Activated CD4-positive, alpha-beta T cell treated with anti-CD3 and anti-CD28 coated beads for 36 hours (primary cell): ENCODE measurements at regions of chr1 and their contacts with region 1.

Region 1: GRCh38 chr1:172638885-172639831 is 19.7 kb upstream of the FASLG start:
- DNase-seq: peak; percentile 91
- ATAC-seq: peak; percentile 83
- H3K4me3 Mint-ChIP-seq: peak overlapping the region; percentile 56
- H3K27ac Mint-ChIP-seq: peak overlapping the region; percentile 99
- H3K4me1 Mint-ChIP-seq: peaks cover 73% of the 10 kb centered on the region
- H3K27me3 Mint-ChIP-seq: peaks cover 22% of the 10 kb centered on the region

Region 2: DNA sequence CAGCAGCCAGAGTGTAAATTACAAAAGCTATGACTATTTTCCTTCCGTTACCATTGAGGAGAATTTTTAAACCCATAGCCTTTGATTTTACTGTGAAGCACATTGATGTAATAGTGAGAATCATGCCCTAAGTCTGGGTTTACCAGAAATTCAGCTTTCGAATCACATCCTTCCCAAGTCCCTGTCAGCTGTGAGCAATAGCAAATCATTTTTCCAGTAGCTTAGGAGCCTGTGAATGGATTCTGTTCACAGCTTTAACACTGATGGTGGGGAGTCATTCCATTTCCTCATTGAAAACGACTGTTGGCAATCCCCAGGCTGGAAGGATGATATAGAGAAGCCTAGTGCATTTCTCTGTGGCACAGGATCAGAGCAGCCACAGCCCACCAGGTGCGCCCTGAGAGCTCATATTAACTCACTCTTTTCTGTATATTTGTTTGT is 300.8 kb before region 1 on chr1:
- CTCF ChIA-PET with region 1: no interaction called
- POLR2A ChIA-PET with region 1: interaction called, 3 read pairs
- intact Hi-C with region 1: loop called (anchors 1 kb)
- DNase-seq: peak; percentile 82
- ATAC-seq: peak; percentile 88
- H3K4me3 Mint-ChIP-seq: no peak overlapping the region
- H3K27ac Mint-ChIP-seq: peak overlapping the region; percentile 30
- H3K4me1 Mint-ChIP-seq: peaks cover 48% of the 10 kb centered on the region
- H3K27me3 Mint-ChIP-seq: peaks cover 2% of the 10 kb centered on the region

Region 3: GRCh38 chr1:172609528-172609927 is 29.6 kb before region 1 on chr1:
- CTCF ChIA-PET with region 1: interaction called, 9 read pairs
- POLR2A ChIA-PET with region 1: no interaction called
- intact Hi-C with region 1: loop called in 1 of 2 experiments (anchors 2 kb)
- DNase-seq: no peak
- ATAC-seq: no peak
- H3K4me3 Mint-ChIP-seq: no peak overlapping the region
- H3K27ac Mint-ChIP-seq: no peak overlapping the region
- H3K4me1 Mint-ChIP-seq: peaks cover 7% of the 10 kb centered on the region
- H3K27me3 Mint-ChIP-seq: no peaks in the 10 kb centered on the region

Region 4: DNA sequence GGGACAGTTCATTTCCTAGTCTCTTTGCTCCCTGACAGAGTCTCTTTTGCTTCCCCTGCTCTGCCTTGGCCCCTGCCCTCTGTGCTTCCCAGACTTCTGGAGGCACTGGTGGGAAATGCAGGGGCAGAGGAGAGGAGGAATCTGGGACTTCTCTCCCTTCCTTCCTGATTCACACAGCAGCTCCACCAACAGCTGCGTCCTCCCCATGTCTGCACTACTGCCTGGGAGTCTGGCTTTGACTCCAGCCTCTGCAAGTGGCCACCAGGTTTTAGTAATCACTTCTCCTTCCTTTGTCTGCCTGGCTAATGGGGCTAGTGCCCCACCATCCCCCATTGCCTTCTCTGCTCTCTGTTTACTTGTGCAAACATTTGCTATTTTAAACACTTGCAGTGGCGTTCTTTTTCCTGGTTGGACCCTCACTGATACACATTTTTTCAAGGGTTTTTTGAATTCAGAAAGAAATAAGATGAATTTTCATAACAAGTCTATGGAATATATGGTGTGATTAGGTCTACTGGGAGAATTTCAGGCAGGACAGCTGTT is 41.6 kb after region 1 on chr1:
- CTCF ChIA-PET with region 1: no interaction called
- POLR2A ChIA-PET with region 1: no interaction called
- intact Hi-C with region 1: no loop called
- DNase-seq: no peak
- ATAC-seq: no peak
- H3K4me3 Mint-ChIP-seq: no peak overlapping the region
- H3K27ac Mint-ChIP-seq: no peak overlapping the region
- H3K4me1 Mint-ChIP-seq: peaks cover 42% of the 10 kb centered on the region
- H3K27me3 Mint-ChIP-seq: no peaks in the 10 kb centered on the region

Region 5: GRCh38 chr1:172699111-172699510 is 60.0 kb after region 1 on chr1:
- CTCF ChIA-PET with region 1: interaction called, 8 read pairs
- POLR2A ChIA-PET with region 1: interaction called, 12 read pairs
- intact Hi-C with region 1: loop called (anchors 1 kb)
- DNase-seq: peak; percentile 82
- ATAC-seq: peak; percentile 80
- H3K4me3 Mint-ChIP-seq: peak overlapping the region; percentile 31
- H3K27ac Mint-ChIP-seq: peak overlapping the region; percentile 97
- H3K4me1 Mint-ChIP-seq: peaks cover 50% of the 10 kb centered on the region
- H3K27me3 Mint-ChIP-seq: peaks cover 4% of the 10 kb centered on the region

Region 6: DNA sequence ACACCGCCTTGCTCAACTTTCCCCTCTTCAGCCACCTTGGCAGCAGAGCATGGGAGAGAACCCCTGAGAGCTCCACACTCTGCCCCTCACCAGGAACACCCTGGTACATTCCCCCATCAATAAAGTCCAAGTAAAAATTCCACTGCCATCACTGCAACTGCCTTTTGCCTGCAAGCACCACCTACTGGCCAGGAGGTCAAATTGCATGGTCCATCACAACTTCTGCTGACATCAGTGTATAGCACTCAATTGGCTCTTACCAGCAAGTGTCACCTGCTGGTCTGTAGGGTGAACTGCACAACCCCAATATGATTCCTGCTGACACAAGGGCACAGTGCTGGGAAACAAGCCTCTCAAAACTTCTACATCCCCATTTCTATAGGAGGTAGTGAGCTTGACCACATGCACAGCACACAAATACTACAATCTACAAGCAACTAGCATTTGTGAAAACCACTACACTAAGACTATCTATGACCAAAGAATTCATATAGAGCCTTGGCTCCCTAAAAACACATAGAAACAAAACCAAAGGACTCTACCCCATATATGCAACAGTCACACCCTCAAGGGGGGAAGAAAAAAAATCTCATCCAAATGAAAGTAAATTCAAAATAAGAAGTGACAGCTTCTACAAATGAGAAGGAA is 88.9 kb after region 1 on chr1:
- CTCF ChIA-PET with region 1: interaction called, 14 read pairs
- POLR2A ChIA-PET with region 1: interaction called, 4 read pairs
- intact Hi-C with region 1: no loop called
- DNase-seq: peak; percentile 71
- ATAC-seq: peak; percentile 96
- H3K4me3 Mint-ChIP-seq: no peak overlapping the region
- H3K27ac Mint-ChIP-seq: no peak overlapping the region
- H3K4me1 Mint-ChIP-seq: peaks cover 18% of the 10 kb centered on the region
- H3K27me3 Mint-ChIP-seq: no peaks in the 10 kb centered on the region

Region 7: GRCh38 chr1:172895050-172895460 is 255.9 kb after region 1 on chr1:
- CTCF ChIA-PET with region 1: interaction called, 4 read pairs
- POLR2A ChIA-PET with region 1: interaction called, 3 read pairs
- intact Hi-C with region 1: loop called (anchors 1 to 10 kb)
- DNase-seq: peak; percentile 35
- ATAC-seq: peak; percentile 84
- H3K4me3 Mint-ChIP-seq: peak overlapping the region; percentile 20
- H3K27ac Mint-ChIP-seq: peak overlapping the region; percentile 32
- H3K4me1 Mint-ChIP-seq: peaks cover 42% of the 10 kb centered on the region
- H3K27me3 Mint-ChIP-seq: peaks cover 29% of the 10 kb centered on the region

Region 8: GRCh38 chr1:174159252-174160108 is 1520.3 kb after region 1 on chr1 and contains the start of gene RABGAP1L:
- CTCF ChIA-PET with region 1: no interaction called
- POLR2A ChIA-PET with region 1: no interaction called
- intact Hi-C with region 1: loop called in 1 of 2 experiments (anchors 10 kb)
- DNase-seq: peak; percentile 97
- ATAC-seq: peak; percentile 83
- H3K4me3 Mint-ChIP-seq: peak within 1 kb of the TSS; percentile 93
- H3K27ac Mint-ChIP-seq: peak within 1 kb of the TSS; percentile 95
- H3K4me1 Mint-ChIP-seq: peaks cover 59% of the 10 kb centered on the region
- H3K27me3 Mint-ChIP-seq: no peaks in the 10 kb centered on the region
- total RNA-seq, gene RABGAP1L: 22.6 to 29.9 TPM